Mucosa of descending colon (tissue), 3 donors: ENCODE measurements at regions of chr4 and their contacts with region 1.

Region 1: GRCh38 chr4:123418351-123418931 is 21.8 kb downstream of the SPRY1 start:
- DNase-seq: no peak
- ATAC-seq: peak; percentile 74
- H3K4me3 ChIP-seq: no peak overlapping the region
- H3K4me1 ChIP-seq: peaks cover 13% of the 10 kb centered on the region
- CTCF ChIP-seq: no peak

Region 2: DNA sequence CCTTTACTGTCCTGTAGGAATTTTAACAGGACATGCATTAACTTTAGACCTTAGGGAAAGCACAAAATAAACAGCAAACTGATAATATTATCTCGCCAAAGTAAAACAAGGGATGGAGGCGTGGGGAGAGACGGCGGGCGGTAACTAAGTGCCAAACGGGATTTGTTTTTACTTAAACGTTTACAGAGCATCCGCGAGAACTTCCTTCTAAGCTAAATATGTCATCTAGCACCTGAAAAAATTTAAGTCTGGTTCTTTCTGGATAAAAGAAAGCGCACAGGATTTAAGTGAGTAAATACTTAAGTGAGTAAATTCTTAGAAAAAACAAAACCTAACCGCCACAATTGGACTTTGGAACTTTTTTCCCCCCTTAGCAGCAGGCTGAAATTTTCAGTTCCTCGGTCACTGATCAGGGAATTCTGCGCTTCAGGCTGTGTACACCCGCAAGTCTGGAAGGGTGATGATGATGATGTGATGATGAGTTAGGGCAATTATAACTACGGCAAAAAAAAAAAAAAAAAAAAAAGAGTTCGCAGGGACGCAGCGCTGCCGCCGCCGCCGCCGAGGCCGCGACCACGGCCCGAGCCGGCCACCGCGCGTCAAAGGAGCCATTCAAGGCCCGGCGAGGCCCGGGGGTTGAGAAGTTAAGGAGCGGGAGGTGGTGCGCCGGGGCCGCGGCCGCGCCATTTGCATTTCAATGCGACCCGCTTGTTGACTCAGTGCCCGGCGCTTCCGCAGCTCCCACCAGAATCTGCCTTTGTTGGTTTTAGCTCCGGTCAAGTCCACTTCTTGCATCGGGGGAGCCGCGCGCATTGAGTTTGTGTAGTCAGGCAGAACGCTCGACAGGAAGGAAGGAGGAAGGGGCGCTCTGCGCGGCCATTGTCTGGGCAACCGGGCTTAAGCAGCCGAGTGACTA is 86.9 kb after region 1 on chr4:
- intact Hi-C with region 1: loop called in 1 of 2 experiments (anchors 10 kb)
- DNase-seq: peak; percentile 55 to 63 (median 63)
- ATAC-seq: peak; percentile 79
- H3K4me3 ChIP-seq: no peak overlapping the region
- H3K4me1 ChIP-seq: no peaks in the 10 kb centered on the region
- CTCF ChIP-seq: no peak

Region 3: GRCh38 chr4:123580981-123581664 is 162.7 kb after region 1 on chr4:
- intact Hi-C with region 1: no loop called
- DNase-seq: no peak
- ATAC-seq: no peak
- H3K4me3 ChIP-seq: no peak overlapping the region
- H3K4me1 ChIP-seq: no peaks in the 10 kb centered on the region
- CTCF ChIP-seq: no peak

Region 4: DNA sequence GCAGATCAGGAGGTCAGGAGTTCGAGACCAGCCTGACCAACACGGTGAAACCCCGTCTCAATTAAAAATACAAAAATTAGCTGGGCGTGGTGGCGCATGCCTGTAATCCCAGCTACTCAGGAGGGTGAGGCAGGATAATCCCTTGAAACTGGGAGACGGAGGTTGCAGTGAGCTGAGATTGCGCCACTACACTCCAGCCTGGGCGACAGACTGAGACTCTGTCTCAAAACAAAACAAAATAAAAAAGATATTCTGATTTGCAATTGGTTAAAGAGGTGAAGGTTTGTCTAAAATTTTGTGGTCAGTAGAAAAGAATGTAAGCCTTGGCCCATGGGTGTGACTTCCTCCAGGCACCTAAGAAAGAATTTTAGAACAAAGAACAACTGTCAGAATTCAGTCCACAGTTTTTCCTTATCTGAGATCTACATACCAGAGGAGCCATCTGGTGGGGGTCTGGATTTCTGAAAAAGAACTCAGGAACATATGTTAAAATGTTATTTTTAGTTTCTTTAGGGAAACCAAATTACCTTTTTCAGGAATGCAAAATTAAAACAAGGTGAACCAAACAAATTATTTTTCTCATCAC is 859.9 kb after region 1 on chr4:
- intact Hi-C with region 1: no loop called
- DNase-seq: no peak
- ATAC-seq: no peak
- H3K4me3 ChIP-seq: no peak overlapping the region
- H3K4me1 ChIP-seq: no peaks in the 10 kb centered on the region
- CTCF ChIP-seq: no peak